CD8-positive, alpha-beta T cell (primary cell): ENCODE measurements at regions of chr19 and their contacts with region 1.

Region 1: DNA sequence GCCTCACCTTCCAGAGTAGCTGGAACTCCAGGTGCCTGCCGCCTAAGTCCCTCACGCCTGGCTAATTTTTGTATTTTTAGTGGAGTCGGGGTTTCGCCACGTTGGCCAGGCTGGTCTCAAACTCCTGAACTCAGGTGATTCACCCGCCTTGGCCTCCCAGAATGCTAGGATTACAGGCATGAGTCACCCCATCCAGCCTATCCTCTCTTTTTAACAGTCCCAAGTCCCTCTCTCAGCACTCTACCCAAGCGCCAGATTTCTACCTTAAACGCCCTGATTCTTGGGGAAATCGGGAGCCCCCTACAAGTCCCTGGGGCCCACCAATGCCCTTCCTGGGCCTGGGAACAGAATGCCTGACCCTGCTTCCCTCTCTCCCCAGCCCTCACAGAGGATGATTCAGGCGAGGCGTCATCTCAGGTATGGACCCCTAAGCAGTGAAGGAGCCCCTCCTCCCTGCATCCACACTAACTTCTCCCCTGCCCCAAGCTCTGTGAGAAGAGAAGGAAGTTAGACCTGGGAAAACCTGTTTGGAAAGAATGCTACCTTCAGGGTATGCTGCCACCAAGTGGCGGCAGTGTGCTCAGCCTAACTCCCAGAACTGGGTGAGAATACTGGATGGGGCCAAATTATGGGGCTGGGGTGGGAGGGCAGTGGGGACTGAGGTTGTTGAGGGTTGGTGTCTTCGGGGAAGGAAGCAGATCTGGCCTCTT is 20.8 kb upstream of the EBI3 start:
- DNase-seq: no peak
- ATAC-seq: no peak
- H3K4me3 ChIP-seq: no peak overlapping the region
- H3K4me3 Mint-ChIP-seq: no peak overlapping the region
- H3K27ac ChIP-seq: no peak overlapping the region
- H3K27ac Mint-ChIP-seq: no peak overlapping the region
- H3K4me1 ChIP-seq: no peaks in the 10 kb centered on the region
- H3K4me1 Mint-ChIP-seq: peaks cover 2% of the 10 kb centered on the region
- H3K27me3 ChIP-seq: no peaks in the 10 kb centered on the region
- H3K27me3 Mint-ChIP-seq: peaks cover 9% of the 10 kb centered on the region
- CTCF ChIP-seq: no peak

Region 2: GRCh38 chr19:3721131-3721886 is 487.2 kb before region 1 on chr19:
- CTCF ChIA-PET with region 1: no interaction called
- POLR2A ChIA-PET with region 1: no interaction called
- intact Hi-C with region 1: loop called in 1 of 2 experiments (anchors 10 kb)
- DNase-seq: peak; percentile 78 to 90 (median 85)
- ATAC-seq: peak; percentile 97
- H3K4me3 ChIP-seq: peak overlapping the region; percentile 55
- H3K4me3 Mint-ChIP-seq: peak overlapping the region; percentile 79
- H3K27ac ChIP-seq: no peak overlapping the region
- H3K27ac Mint-ChIP-seq: no peak overlapping the region
- H3K4me1 ChIP-seq: peaks cover 20% of the 10 kb centered on the region
- H3K4me1 Mint-ChIP-seq: peaks cover 6% of the 10 kb centered on the region
- H3K27me3 ChIP-seq: peaks cover 4 to 7% of the 10 kb centered on the region in 2 experiments
- H3K27me3 Mint-ChIP-seq: peaks cover 10% of the 10 kb centered on the region
- CTCF ChIP-seq: no peak

Region 3: GRCh38 chr19:3852614-3853254 is 355.8 kb before region 1 on chr19:
- CTCF ChIA-PET with region 1: interaction called, 4 read pairs
- POLR2A ChIA-PET with region 1: no interaction called
- intact Hi-C with region 1: loop called in 1 of 2 experiments (anchors 1 kb)
- DNase-seq: peak in 8 of 9 experiments; percentile 27 to 68 (median 54)
- ATAC-seq: peak; percentile 57
- H3K4me3 ChIP-seq: no peak overlapping the region
- H3K4me3 Mint-ChIP-seq: no peak overlapping the region
- H3K27ac ChIP-seq: no peak overlapping the region
- H3K27ac Mint-ChIP-seq: no peak overlapping the region
- H3K4me1 ChIP-seq: no peaks in the 10 kb centered on the region
- H3K4me1 Mint-ChIP-seq: no peaks in the 10 kb centered on the region
- H3K27me3 ChIP-seq: no peaks in the 10 kb centered on the region
- H3K27me3 Mint-ChIP-seq: no peaks in the 10 kb centered on the region
- CTCF ChIP-seq: peak; percentile 37